ENCODE measurements at regions of chr12 and their contacts with region 1.

Region 1: DNA sequence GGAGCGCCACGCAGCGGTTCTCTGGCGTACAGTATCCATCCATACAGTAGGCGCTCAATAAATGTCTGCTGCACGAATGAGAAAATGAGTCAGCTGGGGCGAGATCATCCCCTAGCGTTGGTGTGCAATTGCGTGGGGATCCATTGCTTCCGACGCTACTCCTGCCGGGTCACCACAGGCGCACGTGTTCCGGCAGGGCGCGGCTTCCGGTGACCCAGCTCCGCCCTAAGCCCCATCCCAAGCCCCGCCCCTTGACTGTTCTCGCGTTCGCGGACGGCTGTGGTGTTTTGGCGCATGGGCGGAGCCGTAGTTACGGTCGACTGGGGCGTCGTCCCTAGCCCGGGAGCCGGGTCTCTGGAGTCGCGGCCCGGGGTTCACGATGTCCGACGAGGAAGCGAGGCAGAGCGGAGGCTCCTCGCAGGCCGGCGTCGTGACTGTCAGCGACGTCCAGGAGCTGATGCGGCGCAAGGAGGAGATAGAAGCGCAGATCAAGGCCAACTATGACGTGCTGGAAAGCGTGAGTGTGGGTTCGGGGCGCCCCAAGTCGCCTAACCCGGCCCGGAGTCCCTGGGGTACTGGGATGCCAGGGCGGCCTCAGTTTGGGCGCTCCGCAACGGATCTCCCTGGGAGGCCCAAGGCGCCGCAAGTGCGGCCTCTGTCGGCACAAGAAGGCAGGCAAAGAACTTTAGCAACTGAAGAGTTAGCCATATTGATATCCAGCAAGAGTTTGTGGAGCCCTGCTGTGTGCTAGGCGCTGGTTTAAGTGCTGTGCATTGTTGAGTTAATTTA is at the start of gene PSMD9:
- DNase-seq: peak; percentile 97
- ATAC-seq: peak; percentile 98
- H3K4me3 ChIP-seq: peak within 1 kb of the TSS; percentile 79
- H3K27ac ChIP-seq: peak within 1 kb of the TSS; percentile 96
- H3K4me1 ChIP-seq: peaks cover 10% of the 10 kb centered on the region
- H3K27me3 ChIP-seq: no peaks in the 10 kb centered on the region
- CTCF ChIP-seq: peak; percentile 82
- POLR2A ChIP-seq: peak; percentile 92
- RAD21 ChIP-seq: peak; percentile 80
- total RNA-seq, gene PSMD9: 142 and 156 TPM in 2 replicates

Region 2: GRCh38 chr12:121773011-121773777 is 115.5 kb before region 1 on chr12:
- CTCF ChIA-PET with region 1: interaction called, 3 read pairs
- POLR2A ChIA-PET with region 1: no interaction called
- dilution Hi-C with region 1: no loop called
- in situ Hi-C with region 1: no loop called
- intact Hi-C with region 1: loop called (anchors 1 kb)
- DNase-seq: peak; percentile 58
- ATAC-seq: peak; percentile 86
- H3K4me3 ChIP-seq: no peak overlapping the region
- H3K27ac ChIP-seq: no peak overlapping the region
- H3K4me1 ChIP-seq: peaks cover 6% of the 10 kb centered on the region
- H3K27me3 ChIP-seq: no peaks in the 10 kb centered on the region
- CTCF ChIP-seq: peak; percentile 85
- POLR2A ChIP-seq: no peak
- RAD21 ChIP-seq: peak; percentile 93

Region 3: DNA sequence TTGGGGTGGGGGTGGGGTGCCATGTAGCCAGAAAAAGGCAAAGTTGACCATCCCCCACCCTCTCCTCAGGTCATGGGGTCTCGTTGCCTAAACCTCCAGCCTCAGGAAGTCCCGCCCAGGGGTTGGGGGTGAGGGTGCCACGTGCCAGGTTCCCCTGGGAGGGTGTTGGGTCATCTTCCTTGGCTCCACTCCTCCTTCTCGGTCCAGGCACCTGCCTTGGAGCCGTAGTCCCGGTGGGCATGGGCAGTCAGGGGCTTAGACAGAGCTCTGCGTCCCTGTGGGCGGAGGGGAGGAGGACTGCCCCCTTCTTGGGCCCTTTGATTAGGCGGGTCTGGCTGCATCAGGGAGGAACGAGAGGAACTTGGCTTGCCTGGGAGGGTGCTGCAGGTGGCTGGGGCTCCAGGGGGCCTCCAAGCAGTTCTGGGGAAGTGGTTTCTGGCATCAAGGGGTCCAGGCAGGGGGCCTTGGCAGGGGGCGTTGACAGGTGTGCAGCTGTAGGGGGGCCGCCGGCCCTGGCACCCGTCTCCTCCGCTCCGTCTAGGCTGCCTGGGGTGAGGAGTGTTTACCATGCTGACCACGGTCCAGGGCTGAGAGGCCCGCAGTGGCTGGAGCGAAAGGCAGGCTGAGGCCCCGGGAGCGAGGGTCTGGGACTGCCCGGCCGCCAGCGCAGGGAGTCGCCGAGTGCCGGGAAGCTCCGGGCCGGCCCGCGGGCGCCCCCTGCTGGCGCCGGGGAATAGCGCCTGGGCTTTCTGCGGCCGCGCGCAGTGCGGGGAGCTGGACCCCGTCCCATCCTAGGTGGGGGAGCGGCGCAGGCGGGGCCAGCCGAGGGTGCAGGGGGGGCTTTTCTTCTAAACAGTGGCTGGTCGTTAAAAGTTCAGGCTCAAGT is 77.0 kb before region 1 on chr12:
- CTCF ChIA-PET with region 1: no interaction called
- POLR2A ChIA-PET with region 1: no interaction called
- dilution Hi-C with region 1: no loop called
- in situ Hi-C with region 1: no loop called
- intact Hi-C with region 1: loop called (anchors 1 kb)
- DNase-seq: peak; percentile 66
- ATAC-seq: peak; percentile 86
- H3K4me3 ChIP-seq: peak overlapping the region; percentile 50
- H3K27ac ChIP-seq: peak overlapping the region; percentile 58
- H3K4me1 ChIP-seq: peaks cover 19% of the 10 kb centered on the region
- H3K27me3 ChIP-seq: no peaks in the 10 kb centered on the region
- CTCF ChIP-seq: peak; percentile 94
- POLR2A ChIP-seq: no peak
- RAD21 ChIP-seq: peak; percentile 88

Region 4: GRCh38 chr12:121839106-121839992 is 49.3 kb before region 1 on chr12:
- CTCF ChIA-PET with region 1: interaction called, 4 read pairs
- POLR2A ChIA-PET with region 1: no interaction called
- dilution Hi-C with region 1: no loop called
- in situ Hi-C with region 1: no loop called
- intact Hi-C with region 1: loop called (anchors 2 kb)
- DNase-seq: peak; percentile 96
- ATAC-seq: peak; percentile 100
- H3K4me3 ChIP-seq: peak overlapping the region; percentile 71
- H3K27ac ChIP-seq: peak overlapping the region; percentile 45; the same call in 1 of the 2 replicates
- H3K4me1 ChIP-seq: 0 out of 2 replicates have a peak, but pooled peaks cover 2% of the 10 kb centered on the region
- H3K27me3 ChIP-seq: no peaks in the 10 kb centered on the region
- CTCF ChIP-seq: peak; percentile 38
- POLR2A ChIP-seq: no peak; the same call in 1 of the 2 replicates
- RAD21 ChIP-seq: no peak

Measured in IMR-90 (cell line).